ENCODE measurements at regions of chr3 and their contacts with region 1.

Region 1: DNA sequence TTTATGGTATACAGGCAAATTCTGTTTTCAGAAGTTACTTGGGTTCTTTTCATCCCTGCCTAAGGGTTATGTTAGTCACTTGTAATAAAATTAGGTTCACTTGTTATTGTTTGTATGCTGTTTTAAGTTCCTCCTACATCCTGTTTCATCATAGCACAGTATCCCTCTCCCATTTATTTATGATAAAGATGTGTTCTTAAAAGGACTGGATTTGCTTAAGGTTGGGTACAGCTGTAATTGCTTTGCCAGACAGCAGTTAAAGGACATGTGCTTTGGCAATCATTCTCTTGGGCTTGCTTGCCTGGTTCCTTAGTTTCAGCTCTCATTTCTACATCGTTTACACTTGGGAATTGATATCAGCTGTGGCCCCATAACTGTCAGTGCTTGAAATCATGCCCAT is 11.7 kb downstream of the ATP2C1 start:
- DNase-seq: peak; percentile 29
- H3K4me3 ChIP-seq: no peak overlapping the region
- H3K27ac ChIP-seq: peak overlapping the region; percentile 23
- H3K4me1 ChIP-seq: peaks cover 10% of the 10 kb centered on the region
- H3K27me3 ChIP-seq: no peaks in the 10 kb centered on the region
- CTCF ChIP-seq: no peak

Region 2: GRCh38 chr3:130916507-130917167 is 11.1 kb after region 1 on chr3:
- CTCF ChIA-PET with region 1: no interaction called
- dilution Hi-C with region 1: no loop called
- in situ Hi-C with region 1: no loop called
- intact Hi-C with region 1: loop called (anchors 1 kb)
- DNase-seq: no peak
- H3K4me3 ChIP-seq: no peak overlapping the region
- H3K27ac ChIP-seq: no peak overlapping the region
- H3K4me1 ChIP-seq: no peaks in the 10 kb centered on the region
- H3K27me3 ChIP-seq: no peaks in the 10 kb centered on the region
- CTCF ChIP-seq: no peak

Measured in mammary epithelial cell (primary cell).